Right ventricle myocardium superior (tissue), 1 donor: ENCODE measurements at regions of chr1 and their contacts with region 1.

Region 1: DNA sequence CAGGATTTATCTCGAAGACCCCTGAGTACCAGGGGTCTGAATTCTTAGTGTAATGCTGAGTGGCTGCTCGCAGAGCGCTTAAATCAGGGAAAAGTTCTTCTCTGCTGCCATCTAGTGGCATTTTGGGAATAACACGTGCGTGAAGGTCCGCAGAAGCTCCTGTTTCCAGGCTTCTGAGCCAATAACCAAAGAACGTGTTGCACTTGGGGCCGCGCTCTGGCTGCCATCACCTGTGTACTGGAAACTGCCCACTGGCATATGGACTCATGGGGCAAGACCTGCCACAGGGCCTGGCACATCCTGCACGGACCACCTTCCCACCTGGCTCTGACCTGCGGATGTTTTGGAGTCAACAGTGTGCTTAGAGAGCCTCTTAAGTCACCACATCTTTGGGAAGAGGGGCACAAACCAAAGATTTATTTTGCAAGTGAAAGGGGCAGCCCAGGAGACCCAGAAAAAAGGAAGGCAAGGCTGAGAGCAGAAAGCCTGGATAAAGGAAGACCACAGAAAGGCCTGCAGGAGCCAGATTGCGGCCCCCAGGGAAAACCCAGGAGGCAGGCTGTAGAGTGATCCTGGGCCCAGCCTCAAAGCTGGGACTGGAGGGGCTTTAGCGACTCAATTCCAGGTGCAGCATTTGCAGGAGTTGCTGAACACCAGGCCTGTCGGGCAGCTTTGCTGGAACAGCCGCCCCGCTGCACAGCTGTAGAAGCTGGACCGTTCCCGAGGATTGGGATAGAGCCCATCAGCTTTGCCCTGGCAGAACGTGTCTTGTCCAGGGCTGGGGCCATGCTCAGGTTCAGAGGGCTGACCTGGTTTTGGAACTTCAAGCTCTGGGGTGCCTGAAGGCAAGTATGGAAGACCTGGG is 13.0 kb downstream of the CHIT1 start:
- DNase-seq: no peak
- ATAC-seq: peak; percentile 92

Region 2: DNA sequence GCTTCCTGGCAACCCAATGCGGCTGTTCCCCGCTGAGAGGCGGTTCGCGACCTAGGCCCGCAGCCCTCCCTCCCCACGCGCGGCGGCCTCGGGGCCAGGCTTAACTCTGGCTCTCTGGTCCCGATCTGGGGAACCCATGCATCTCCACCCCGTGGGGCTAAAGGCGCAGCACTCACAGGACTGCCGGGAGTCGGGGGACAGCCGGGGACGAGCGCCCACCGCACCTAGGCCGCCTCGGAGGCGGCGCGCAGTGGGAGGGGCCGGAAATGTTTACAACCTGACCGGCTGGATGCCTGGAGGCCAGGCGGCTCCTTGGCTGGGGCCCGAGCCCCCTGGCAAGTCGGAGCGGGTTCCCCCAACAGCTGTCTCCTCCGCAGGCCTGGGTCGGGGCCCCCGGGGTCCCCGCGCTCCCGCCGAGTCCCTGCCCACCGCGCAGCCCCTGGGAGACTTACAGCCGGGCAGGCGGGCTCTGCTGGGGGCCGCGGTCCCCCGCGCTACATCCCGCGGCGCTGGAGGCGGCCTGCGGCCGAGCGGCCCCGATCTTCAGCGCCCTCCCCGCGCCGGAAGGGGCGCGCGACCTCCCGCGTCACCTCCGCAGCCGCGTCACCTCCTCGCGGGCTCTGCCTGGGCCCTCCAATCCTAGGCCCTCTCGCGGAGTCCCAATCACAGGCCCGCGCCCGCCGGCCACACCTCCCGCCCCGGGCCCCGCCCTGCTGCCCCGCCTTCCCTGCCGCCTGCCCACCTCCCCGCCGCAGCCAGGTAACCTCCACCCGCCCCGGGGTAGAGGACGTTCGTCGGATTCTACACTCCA is 258.6 kb before region 1 on chr1 and contains the start of gene ADIPOR1:
- intact Hi-C with region 1: no loop called
- DNase-seq: peak; percentile 95
- ATAC-seq: peak; percentile 99
- total RNA-seq, gene ADIPOR1: 76.6 TPM

Region 3: GRCh38 chr1:203038891-203039608 is 177.5 kb before region 1 on chr1:
- intact Hi-C with region 1: loop called (anchors 2 kb)
- DNase-seq: peak; percentile 88
- ATAC-seq: peak; percentile 87

Region 4: DNA sequence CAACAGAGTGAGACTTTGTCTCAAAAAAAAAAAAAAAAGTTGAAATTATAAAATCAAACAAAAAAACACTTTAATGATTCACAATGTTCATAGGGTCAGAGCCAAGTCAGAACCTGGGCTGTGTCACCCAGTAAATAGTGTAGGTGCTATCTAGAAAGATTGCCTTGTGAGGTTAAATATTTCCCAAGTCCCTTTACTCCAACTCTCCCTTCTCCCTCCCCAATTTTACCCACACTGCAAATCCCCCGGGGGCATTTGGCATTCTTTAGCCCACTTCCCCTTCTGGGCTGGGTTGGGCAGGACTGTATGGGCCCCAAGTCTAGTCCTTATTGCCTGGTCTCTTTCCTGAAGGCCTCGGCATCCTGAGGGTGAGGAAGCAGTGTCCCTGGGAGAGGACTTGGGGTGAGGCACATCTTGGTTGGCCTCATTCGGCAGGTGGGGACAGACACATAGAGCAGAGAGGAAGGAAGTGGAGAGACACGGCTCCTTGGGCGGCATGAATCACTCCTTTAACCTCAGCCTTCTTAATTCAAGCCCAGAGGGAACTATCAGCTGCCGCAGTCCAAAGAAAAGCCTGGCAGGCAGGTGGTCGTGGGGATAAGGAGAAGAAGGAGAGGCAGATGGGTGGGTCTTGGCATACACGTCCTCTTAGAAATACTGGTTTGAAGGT is 80.7 kb before region 1 on chr1:
- intact Hi-C with region 1: no loop called
- DNase-seq: no peak
- ATAC-seq: no peak